ENCODE measurements at regions of chr20 and their contacts with region 1.

Region 1: DNA sequence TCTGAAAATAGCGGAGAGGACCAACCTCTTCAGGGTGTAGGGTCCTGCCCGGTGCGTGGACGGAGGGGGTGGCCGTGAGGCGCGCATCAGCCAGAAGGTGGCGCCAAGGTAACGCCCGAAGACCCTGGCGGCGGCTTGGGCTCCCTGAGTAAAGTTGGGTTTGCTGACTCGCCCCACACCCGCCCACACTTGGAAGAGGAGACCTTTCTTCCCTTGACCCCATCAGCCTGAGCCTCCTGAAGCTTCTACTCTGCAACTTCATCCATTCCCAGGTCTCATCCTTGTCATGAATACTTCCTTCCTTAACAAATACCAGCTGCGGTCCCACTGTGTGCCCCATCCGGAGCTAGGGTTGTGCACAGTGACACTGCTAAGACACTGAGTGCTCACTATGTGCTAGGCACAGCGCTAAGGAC is 14.6 kb downstream of the CD40 start:
- DNase-seq: peak; percentile 77
- H3K4me3 ChIP-seq: no peak overlapping the region
- H3K27ac ChIP-seq: no peak overlapping the region
- H3K4me1 ChIP-seq: peaks cover 3% of the 10 kb centered on the region
- H3K27me3 ChIP-seq: peaks cover 8 to 9% of the 10 kb centered on the region in 2 experiments
- CTCF ChIP-seq: peak; percentile 81 to 95
- POLR2A ChIP-seq: no peak

Region 2: DNA sequence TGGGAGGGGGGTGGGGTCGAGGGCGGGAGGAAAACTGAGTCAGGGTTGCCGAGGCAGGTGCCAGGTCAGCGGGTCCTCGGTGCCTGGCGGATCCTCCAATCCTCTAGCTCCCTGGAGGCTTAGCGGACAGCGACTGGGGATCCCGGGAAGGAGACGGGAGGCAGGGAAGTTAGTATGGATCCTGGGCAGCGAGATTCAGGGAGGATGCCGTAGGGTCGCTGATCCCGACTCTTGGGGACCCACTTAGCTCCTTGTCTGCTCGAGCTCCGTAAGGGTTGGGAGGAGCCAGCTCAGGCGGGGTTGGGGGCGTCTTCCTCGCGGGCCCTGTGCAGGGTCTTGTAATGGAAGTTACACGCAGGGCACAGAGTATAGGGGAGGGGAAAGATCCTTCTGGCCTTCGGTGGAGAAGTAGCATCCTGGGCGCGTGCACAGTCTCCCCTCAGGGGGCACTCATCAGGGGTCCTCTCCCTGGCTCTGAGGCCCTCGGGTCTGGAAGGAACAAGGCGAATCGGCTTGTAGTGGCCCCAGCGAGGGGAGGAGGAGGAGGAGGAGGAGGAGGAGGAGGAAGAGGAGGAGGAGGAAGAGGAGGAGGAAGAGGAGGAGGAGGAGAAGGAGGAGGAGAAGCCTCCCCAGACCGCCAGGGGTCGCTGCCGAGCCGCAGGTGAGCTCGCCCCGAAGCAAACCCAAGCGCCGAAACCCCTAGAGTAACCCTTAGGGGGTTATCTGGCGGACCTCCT is 110.1 kb before region 1 on chr20:
- CTCF ChIA-PET with region 1: interaction called, 9 read pairs
- POLR2A ChIA-PET with region 1: no interaction called
- dilution Hi-C with region 1: no loop called
- intact Hi-C with region 1: loop called (anchors 1 kb)
- DNase-seq: no peak
- H3K4me3 ChIP-seq: no peak overlapping the region
- H3K27ac ChIP-seq: no peak overlapping the region
- H3K4me1 ChIP-seq: no peaks in the 10 kb centered on the region
- H3K27me3 ChIP-seq: peaks cover 10 to 22% of the 10 kb centered on the region in 2 experiments
- CTCF ChIP-seq: peak; percentile 53 to 77
- POLR2A ChIP-seq: no peak

Region 3: GRCh38 chr20:46307139-46307998 is 174.7 kb after region 1 on chr20:
- CTCF ChIA-PET with region 1: interaction called, 4 read pairs
- POLR2A ChIA-PET with region 1: no interaction called
- dilution Hi-C with region 1: no loop called
- intact Hi-C with region 1: loop called (anchors 1 kb)
- DNase-seq: peak; percentile 22
- H3K4me3 ChIP-seq: no peak overlapping the region
- H3K27ac ChIP-seq: no peak overlapping the region
- H3K4me1 ChIP-seq: no peaks in the 10 kb centered on the region
- H3K27me3 ChIP-seq: peaks cover 48 to 60% of the 10 kb centered on the region in 2 experiments
- CTCF ChIP-seq: peak; percentile 75 to 88
- POLR2A ChIP-seq: no peak

Region 4: GRCh38 chr20:46349035-46349741 is 216.5 kb after region 1 on chr20:
- CTCF ChIA-PET with region 1: interaction called, 35 read pairs
- POLR2A ChIA-PET with region 1: no interaction called
- dilution Hi-C with region 1: no loop called
- intact Hi-C with region 1: loop called (anchors 1 kb)
- DNase-seq: peak; percentile 48
- H3K4me3 ChIP-seq: no peak overlapping the region
- H3K27ac ChIP-seq: no peak overlapping the region
- H3K4me1 ChIP-seq: peaks cover 9% of the 10 kb centered on the region
- H3K27me3 ChIP-seq: peaks cover 1 to 4% of the 10 kb centered on the region in 2 experiments
- CTCF ChIP-seq: peak; percentile 74 to 87
- POLR2A ChIP-seq: no peak

Region 5: GRCh38 chr20:46411637-46412036 is 278.9 kb after region 1 on chr20:
- CTCF ChIA-PET with region 1: interaction called, 6 read pairs
- POLR2A ChIA-PET with region 1: no interaction called
- dilution Hi-C with region 1: no loop called
- intact Hi-C with region 1: loop called (anchors 1 kb)
- DNase-seq: no peak
- H3K4me3 ChIP-seq: no peak overlapping the region
- H3K27ac ChIP-seq: no peak overlapping the region
- H3K4me1 ChIP-seq: peaks cover 8% of the 10 kb centered on the region
- H3K27me3 ChIP-seq: peaks cover 5 to 17% of the 10 kb centered on the region in 2 experiments
- CTCF ChIP-seq: no peak
- POLR2A ChIP-seq: no peak

Region 6: GRCh38 chr20:46681032-46681854 is 548.5 kb after region 1 on chr20:
- CTCF ChIA-PET with region 1: interaction called, 4 read pairs
- POLR2A ChIA-PET with region 1: no interaction called
- dilution Hi-C with region 1: no loop called
- intact Hi-C with region 1: loop called (anchors 2 kb)
- DNase-seq: peak; percentile 52
- H3K4me3 ChIP-seq: no peak overlapping the region
- H3K27ac ChIP-seq: no peak overlapping the region
- H3K4me1 ChIP-seq: peaks cover 3% of the 10 kb centered on the region
- H3K27me3 ChIP-seq: no peaks in the 10 kb centered on the region
- CTCF ChIP-seq: peak; percentile 69 to 75
- POLR2A ChIP-seq: no peak

Measured in endothelial cell of umbilical vein (primary cell).